Activated T-helper 2 cell treated with anti-CD3 and anti-CD28 coated beads, Interferon-gamma antibody, Interleukin-2, Interleukin-4, amounts not matched to agents 10 μg/mL and 5 μg/mL and 100 μg/mL, durations not matched to agents 14 hours and 24 hours and 36 hours (primary cell): ENCODE measurements at regions of chr1 and their contacts with region 1.

Region 1: GRCh38 chr1:29703596-29704370 is 467.5 kb downstream of the PTPRU start:
- DNase-seq: no peak
- H3K4me3 Mint-ChIP-seq: no peak overlapping the region
- H3K27ac Mint-ChIP-seq: no peak overlapping the region
- H3K4me1 Mint-ChIP-seq: peaks cover 13% of the 10 kb centered on the region
- H3K27me3 Mint-ChIP-seq: peaks cover 29% of the 10 kb centered on the region

Region 2: GRCh38 chr1:29235955-29236684 is 467.7 kb before region 1 on chr1 and contains the start of gene PTPRU:
- intact Hi-C with region 1: loop called (anchors 5 kb)
- DNase-seq: peak; percentile 78
- H3K4me3 Mint-ChIP-seq: peak within 1 kb of the TSS; percentile 76
- H3K27ac Mint-ChIP-seq: peak within 1 kb of the TSS; percentile 2
- H3K4me1 Mint-ChIP-seq: peaks cover 15% of the 10 kb centered on the region
- H3K27me3 Mint-ChIP-seq: peaks cover 52% of the 10 kb centered on the region
- total RNA-seq, gene PTPRU: 0.30 and 0.37 TPM in 2 replicates

Region 3: GRCh38 chr1:29688471-29689365 is 15.1 kb before region 1 on chr1:
- intact Hi-C with region 1: no loop called
- DNase-seq: no peak
- H3K4me3 Mint-ChIP-seq: no peak overlapping the region
- H3K27ac Mint-ChIP-seq: peak overlapping the region; percentile 60
- H3K4me1 Mint-ChIP-seq: peaks cover 22% of the 10 kb centered on the region
- H3K27me3 Mint-ChIP-seq: peaks cover 16% of the 10 kb centered on the region

Region 4: GRCh38 chr1:29793101-29793546 is 89.3 kb after region 1 on chr1:
- intact Hi-C with region 1: loop called (anchors 10 kb)
- DNase-seq: peak; percentile 49
- H3K4me3 Mint-ChIP-seq: no peak overlapping the region
- H3K27ac Mint-ChIP-seq: no peak overlapping the region
- H3K4me1 Mint-ChIP-seq: no peaks in the 10 kb centered on the region
- H3K27me3 Mint-ChIP-seq: no peaks in the 10 kb centered on the region

Region 5: GRCh38 chr1:29849038-29849750 is 145.4 kb after region 1 on chr1:
- intact Hi-C with region 1: loop called (anchors 10 kb)
- DNase-seq: peak; percentile 22
- H3K4me3 Mint-ChIP-seq: no peak overlapping the region
- H3K27ac Mint-ChIP-seq: no peak overlapping the region
- H3K4me1 Mint-ChIP-seq: no peaks in the 10 kb centered on the region
- H3K27me3 Mint-ChIP-seq: no peaks in the 10 kb centered on the region